ENCODE measurements at regions of chr3 and their contacts with region 1.

Region 1: GRCh38 chr3:71583566-71584449 is at the start of gene FOXP1:
- DNase-seq: peak; percentile 61 to 82 (median 71)
- H3K4me3 ChIP-seq: peak within 1 kb of the TSS; percentile 68 to 93 (median 83)
- H3K27ac ChIP-seq: peak within 1 kb of the TSS; percentile 88 to 100 (median 98)
- H3K27me3 ChIP-seq: no peaks in the 10 kb centered on the region
- CTCF ChIP-seq: peak in 3 of 56 donors; percentile 4 to 33 (median 24)
- total RNA-seq, gene FOXP1: 84.2 to 160 (median 118) TPM

Region 2: DNA sequence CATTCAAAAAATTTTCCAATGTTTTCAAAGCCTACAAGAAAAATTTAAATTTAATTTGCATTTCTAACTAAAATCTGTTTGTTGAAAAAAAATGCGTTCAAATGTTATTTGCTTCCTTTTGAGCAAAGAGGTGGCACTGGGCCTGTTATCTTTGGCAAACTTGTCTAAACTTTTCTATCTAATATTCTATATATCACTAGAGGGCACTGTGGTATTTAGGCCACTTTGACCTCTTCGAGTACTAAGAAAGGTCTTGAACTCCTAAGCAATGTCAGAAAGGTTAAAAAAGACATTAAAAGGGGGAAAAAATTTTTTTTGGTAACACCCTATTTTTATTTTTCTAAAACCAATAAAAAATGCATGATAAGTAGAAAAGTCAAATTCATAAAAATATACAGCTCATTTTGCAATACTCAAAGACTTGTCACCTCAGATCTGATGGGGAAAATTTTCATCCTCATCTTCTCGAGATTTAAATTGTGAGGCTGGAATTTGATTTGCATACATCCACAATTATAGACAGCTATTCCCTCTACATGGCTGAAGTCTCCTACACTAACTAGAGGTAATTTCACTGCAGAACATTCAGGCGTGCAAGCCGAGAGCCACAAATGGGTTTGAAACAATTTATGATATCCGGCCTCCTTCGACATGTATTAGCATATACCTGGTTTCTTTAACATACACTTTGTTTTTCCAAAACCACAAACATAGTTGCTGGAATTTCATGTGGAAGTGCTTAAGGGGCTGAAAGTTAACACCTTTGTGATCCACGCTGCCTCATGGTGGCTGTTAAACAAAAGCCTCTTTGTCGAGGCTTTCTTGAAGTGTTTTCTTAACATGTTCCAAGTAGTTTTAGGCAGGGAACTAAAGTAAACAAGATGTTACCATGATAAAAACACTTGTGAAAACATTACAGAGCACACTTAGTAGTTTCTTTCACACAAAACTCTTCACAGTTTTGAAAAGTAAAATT is 576.7 kb before region 1 on chr3:
- intact Hi-C with region 1: loop called in 1 of 2 experiments (anchors 10 kb)
- DNase-seq: no peak
- H3K4me3 ChIP-seq: peak overlapping the region in 2 of 59 donors; percentile 31 to 43
- H3K27ac ChIP-seq: peak overlapping the region in 35 of 59 donors; percentile 7 to 66 (median 49)
- H3K27me3 ChIP-seq: no peaks in the 10 kb centered on the region
- CTCF ChIP-seq: peak in 55 of 56 donors; percentile 42 to 88 (median 63)

Region 3: DNA sequence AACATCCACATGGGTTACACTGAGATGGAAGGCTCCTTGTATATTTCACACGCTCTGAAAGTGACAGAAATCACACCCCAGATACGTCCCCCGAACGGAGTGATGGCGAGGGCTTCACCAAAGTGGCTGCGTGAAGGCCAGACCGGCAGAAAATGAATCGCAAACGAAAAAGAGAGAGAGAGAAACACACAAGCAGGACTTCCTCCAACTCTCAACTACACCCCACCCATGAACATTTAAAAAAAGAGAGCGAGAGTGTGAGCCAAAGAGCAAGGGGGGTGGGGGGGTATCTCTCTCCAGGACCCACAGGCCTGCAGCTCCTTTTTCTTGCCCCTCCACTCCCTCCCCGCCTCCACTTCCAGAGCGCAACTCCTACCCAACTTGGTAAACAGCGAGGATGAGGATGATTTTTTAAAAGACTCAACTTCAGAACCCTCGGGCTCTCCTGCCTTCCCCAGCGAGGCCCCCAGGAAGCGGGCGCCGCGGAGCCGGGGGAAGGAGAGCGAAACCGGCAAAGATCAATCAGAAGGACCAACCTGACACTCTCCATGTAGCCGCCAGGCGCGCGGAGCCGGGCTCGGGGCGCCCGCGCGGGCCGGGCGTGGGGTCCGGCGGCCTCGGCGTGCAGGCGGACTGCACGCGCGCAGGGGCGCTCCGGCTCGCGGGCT is 519.4 kb before region 1 on chr3:
- intact Hi-C with region 1: loop called (anchors 2 to 5 kb)
- DNase-seq: peak in 2 of 10 donors; percentile 31 to 65
- H3K4me3 ChIP-seq: peak overlapping the region; percentile 44 to 85 (median 74)
- H3K27ac ChIP-seq: peak overlapping the region; percentile 48 to 96 (median 87)
- H3K27me3 ChIP-seq: no peaks in the 10 kb centered on the region
- CTCF ChIP-seq: peak in 1 of 56 donors; percentile 19

Region 4: GRCh38 chr3:71247221-71247976 is 336.4 kb before region 1 on chr3:
- intact Hi-C with region 1: loop called (anchors 5 to 10 kb)
- DNase-seq: peak in 2 of 10 donors; percentile 12 to 46
- H3K4me3 ChIP-seq: no peak overlapping the region
- H3K27ac ChIP-seq: no peak overlapping the region
- H3K27me3 ChIP-seq: no peaks in the 10 kb centered on the region
- CTCF ChIP-seq: peak in 23 of 56 donors; percentile 7 to 55 (median 22)

Region 5: GRCh38 chr3:71497971-71498444 is 85.8 kb before region 1 on chr3:
- intact Hi-C with region 1: loop called in 1 of 2 experiments (anchors 2 kb)
- DNase-seq: peak in 1 of 10 donors; percentile 27
- H3K4me3 ChIP-seq: peak overlapping the region in 1 of 59 donors; percentile 4
- H3K27ac ChIP-seq: peak overlapping the region; percentile 3 to 91 (median 78)
- H3K27me3 ChIP-seq: no peaks in the 10 kb centered on the region
- CTCF ChIP-seq: no peak

Region 6: DNA sequence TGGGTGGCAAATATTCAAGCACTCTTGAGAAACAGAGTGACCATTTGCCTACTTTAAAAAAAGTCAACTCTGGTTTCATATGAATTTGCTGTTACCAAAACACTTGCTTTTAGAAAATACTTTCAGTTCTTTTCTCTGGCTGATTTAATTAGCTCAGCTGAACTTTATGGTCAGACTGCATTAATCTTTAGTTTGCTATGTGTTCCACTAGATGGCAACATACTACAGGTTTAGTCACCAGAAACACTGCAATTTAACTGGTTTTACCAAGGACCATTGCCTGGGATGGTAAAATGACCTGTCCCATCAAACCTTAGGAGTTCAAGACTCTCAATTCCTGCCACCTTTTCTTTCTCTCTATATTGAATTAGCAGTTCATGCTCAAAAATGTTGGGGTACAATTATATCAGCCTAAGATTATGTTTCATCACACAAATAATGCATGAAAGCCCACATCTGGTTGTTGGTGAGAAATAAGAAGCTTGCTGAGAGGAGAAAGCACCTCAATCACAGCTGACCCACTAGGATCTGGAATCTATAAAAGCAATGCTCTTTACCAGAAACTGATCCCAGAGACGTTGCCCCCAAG is 127.2 kb after region 1 on chr3:
- intact Hi-C with region 1: no loop called
- DNase-seq: no peak
- H3K4me3 ChIP-seq: no peak overlapping the region
- H3K27ac ChIP-seq: peak overlapping the region in 16 of 59 donors; percentile 4 to 94 (median 40)
- H3K27me3 ChIP-seq: no peaks in the 10 kb centered on the region
- CTCF ChIP-seq: peak; percentile 32 to 86 (median 72)